ENCODE measurements at regions of chr7 and their contacts with region 1.

Region 1: GRCh38 chr7:43729214-43729923 is at the start of gene COA1:
- H3K4me3 ChIP-seq: peak within 1 kb of the TSS; percentile 82
- H3K27ac ChIP-seq: peak within 1 kb of the TSS; percentile 83
- H3K4me1 ChIP-seq: no peaks in the 10 kb centered on the region; the same call in 1 of the 2 replicates
- CTCF ChIP-seq: no peak

Region 2: DNA sequence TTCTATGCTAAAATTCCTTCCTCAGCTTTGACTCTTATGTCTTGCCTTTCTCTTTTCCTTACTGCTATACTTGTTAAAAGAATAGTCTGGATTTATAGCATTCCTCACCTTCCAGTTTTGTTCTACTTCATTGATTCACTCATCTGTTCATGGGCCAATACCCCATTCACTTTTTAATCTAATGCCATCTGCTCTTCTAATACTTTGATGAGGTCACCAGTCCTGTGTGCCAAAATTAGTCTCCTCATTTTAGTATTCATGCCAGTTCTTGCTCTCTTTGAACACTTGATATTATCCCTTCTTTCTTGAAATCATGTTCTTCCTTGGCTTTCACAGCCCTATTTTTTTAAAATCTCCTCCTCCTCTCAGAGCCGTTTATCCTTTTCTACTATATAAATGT is 127.1 kb before region 1 on chr7:
- CTCF ChIA-PET with region 1: no interaction called
- POLR2A ChIA-PET with region 1: no interaction called
- H3K4me3 ChIP-seq: no peak overlapping the region
- H3K27ac ChIP-seq: no peak overlapping the region
- H3K4me1 ChIP-seq: no peaks in the 10 kb centered on the region
- CTCF ChIP-seq: no peak

Region 3: DNA sequence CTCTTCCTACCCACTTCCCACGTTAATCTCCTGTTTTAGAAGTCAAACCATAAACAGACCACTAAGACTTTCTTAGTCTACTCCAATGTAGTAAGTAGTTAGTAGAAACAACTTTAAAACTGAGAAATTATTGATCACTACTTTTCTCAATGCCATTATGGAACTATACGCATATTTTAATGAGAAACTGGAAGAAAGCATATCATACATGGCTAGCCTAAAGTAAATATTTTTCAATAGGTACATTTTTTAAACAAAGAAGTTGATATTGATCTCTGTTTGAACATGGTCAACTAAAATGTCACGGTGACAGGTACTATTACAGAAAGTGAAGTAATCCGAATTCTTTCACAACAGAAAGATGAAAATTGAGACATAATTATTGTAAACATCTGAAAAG is 47.2 kb before region 1 on chr7:
- CTCF ChIA-PET with region 1: no interaction called
- POLR2A ChIA-PET with region 1: no interaction called
- H3K4me3 ChIP-seq: no peak overlapping the region
- H3K27ac ChIP-seq: no peak overlapping the region
- H3K4me1 ChIP-seq: no peaks in the 10 kb centered on the region
- CTCF ChIP-seq: no peak

Region 4: GRCh38 chr7:43758029-43758821 is 28.9 kb after region 1 on chr7 and contains the start of gene BLVRA:
- CTCF ChIA-PET with region 1: interaction called, 4 read pairs
- POLR2A ChIA-PET with region 1: interaction called, 16 read pairs
- H3K4me3 ChIP-seq: peak within 1 kb of the TSS; percentile 66
- H3K27ac ChIP-seq: peak within 1 kb of the TSS; percentile 83
- H3K4me1 ChIP-seq: peaks cover 11% of the 10 kb centered on the region
- CTCF ChIP-seq: no peak

Region 5: GRCh38 chr7:43764039-43764761 is 34.8 kb after region 1 on chr7:
- CTCF ChIA-PET with region 1: interaction called, 4 read pairs
- POLR2A ChIA-PET with region 1: interaction called, 16 read pairs
- H3K4me3 ChIP-seq: no peak overlapping the region
- H3K27ac ChIP-seq: no peak overlapping the region; the same call in 1 of the 2 replicates
- H3K4me1 ChIP-seq: peaks cover 23% of the 10 kb centered on the region
- CTCF ChIP-seq: no peak

Region 6: GRCh38 chr7:43869867-43870240 is 140.5 kb after region 1 on chr7:
- CTCF ChIA-PET with region 1: no interaction called
- POLR2A ChIA-PET with region 1: no interaction called
- H3K4me3 ChIP-seq: peak overlapping the region; percentile 45
- H3K27ac ChIP-seq: peak overlapping the region; percentile 66; the same call in 1 of the 2 replicates
- H3K4me1 ChIP-seq: peaks cover 3% of the 10 kb centered on the region; the same call in 1 of the 2 replicates
- CTCF ChIP-seq: no peak

Region 7: DNA sequence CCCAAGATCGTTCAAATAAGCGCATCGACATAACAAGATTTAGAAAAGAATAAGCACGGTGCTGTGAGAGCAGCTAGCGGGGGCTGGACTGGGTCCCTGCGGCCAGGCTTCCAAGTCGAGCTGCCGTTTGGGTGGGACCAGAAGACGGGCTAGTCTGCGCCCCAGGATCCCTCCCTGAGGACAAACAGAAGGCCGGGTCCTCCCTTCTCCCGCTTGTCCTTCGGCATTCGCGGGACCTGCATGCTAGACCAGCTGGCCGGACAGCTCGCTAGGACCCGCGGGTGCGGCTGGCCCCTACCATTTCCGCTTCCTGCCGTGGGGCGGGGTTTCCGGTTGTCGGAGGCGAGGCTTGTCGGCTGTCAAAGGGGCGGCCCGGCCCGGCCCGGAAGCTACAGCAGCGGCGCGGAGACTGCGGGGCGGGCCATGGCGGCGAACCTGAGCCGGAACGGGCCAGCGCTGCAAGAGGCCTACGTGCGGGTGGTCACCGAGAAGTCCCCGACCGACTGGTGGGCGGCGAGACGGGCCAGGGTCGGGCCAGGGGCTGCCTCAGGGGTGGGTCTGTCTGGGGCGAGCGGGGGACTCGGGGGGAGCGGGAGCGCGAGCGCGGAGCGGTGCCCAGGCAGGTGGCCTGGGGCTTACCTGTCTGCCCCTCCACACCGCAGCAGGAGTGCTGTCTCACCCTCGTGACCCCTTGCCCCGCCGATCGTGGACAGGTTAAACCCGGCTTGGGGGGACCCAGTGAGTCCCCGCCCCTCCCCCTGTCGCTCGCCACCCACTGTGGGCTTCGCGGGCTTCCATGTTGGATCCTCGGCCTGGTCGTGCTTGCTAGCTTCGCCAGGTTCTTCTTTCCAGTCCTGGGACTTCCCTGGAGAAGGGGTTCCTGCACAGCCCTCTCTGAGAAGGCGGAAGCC is 315.2 kb after region 1 on chr7 and contains the start of gene DBNL:
- CTCF ChIA-PET with region 1: no interaction called
- POLR2A ChIA-PET with region 1: no interaction called
- H3K4me3 ChIP-seq: peak within 1 kb of the TSS; percentile 96
- H3K27ac ChIP-seq: peak within 1 kb of the TSS; percentile 63
- H3K4me1 ChIP-seq: peaks cover 6% of the 10 kb centered on the region; the same call in 1 of the 2 replicates
- CTCF ChIP-seq: no peak

Measured in HEK293 (cell line).